ENCODE measurements at regions of chr20 and their contacts with region 1.

Region 1: GRCh38 chr20:1965520-1966351 is 28.1 kb downstream of the PDYN start:
- DNase-seq: peak; percentile 19
- ATAC-seq: peak; percentile 97
- H3K4me3 ChIP-seq: no peak overlapping the region
- H3K27ac ChIP-seq: no peak overlapping the region
- H3K4me1 ChIP-seq: no peaks in the 10 kb centered on the region; the same call in 1 of the 2 replicates
- H3K27me3 ChIP-seq: peaks cover 0 to 3% of the 10 kb centered on the region in 2 experiments; a peak in 3 of 4 replicates
- CTCF ChIP-seq: peak; percentile 92 to 95 (median 92)
- EP300 ChIP-seq: no peak
- POLR2A ChIP-seq: no peak
- RAD21 ChIP-seq: peak; percentile 84

Region 2: GRCh38 chr20:1423625-1424106 is 542.1 kb before region 1 on chr20:
- CTCF ChIA-PET with region 1: no interaction called
- POLR2A ChIA-PET with region 1: no interaction called
- RAD21 ChIA-PET with region 1: no interaction called
- SMC1A ChIA-PET with region 1: no interaction called
- in situ Hi-C with region 1: no loop called
- intact Hi-C with region 1: no loop called
- DNase-seq: no peak
- ATAC-seq: peak; percentile 89
- H3K4me3 ChIP-seq: no peak overlapping the region
- H3K27ac ChIP-seq: no peak overlapping the region
- H3K4me1 ChIP-seq: no peaks in the 10 kb centered on the region
- H3K27me3 ChIP-seq: peaks cover 0 to 2% of the 10 kb centered on the region in 2 experiments; a peak in 2 of 4 replicates
- CTCF ChIP-seq: peak in 2 of 3 experiments; percentile 12 to 36; a peak in 3 of 6 replicates
- EP300 ChIP-seq: no peak
- POLR2A ChIP-seq: no peak
- RAD21 ChIP-seq: peak; percentile 14; the same call in 1 of the 2 replicates

Region 3: DNA sequence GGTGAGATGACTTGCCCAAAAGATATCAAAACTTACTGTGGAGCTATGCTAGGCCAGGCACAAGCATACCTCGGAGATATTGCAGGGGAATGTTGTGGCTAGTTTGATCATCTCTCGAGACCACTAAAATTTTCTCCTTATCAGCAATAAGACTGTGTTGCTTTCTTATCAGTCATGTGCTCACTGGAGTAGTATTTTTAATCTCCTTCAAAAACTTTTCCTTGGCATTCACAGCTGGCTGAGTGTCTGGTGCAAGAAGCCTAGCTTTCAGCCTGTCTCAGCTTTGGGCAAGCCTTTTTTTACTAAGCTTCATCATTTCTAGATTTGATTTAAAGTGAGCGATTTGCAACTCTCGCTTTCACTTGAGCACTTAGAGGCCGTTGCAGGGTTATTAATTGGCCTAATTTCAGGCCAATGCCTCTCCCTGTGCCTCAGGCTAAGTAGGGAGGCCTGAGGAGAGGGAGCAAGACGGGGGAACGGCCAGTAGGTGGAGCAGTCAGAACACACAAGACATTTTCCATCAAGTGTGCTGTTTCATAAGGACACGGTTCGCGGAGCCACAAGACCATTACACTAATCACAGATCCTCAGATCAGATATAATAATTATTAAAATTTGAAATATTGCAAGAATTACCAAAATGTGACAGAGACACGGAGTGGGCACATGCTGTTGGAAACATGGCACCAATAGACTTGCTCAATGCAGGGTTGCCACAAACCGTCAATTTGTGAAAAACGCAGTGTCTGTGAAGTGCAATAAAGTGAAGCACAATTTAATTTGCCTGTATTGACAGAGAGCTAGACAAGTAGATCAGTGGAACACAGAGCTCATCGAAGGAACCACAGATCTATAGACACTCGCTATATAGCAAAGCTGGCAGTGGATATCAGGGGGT is 201.4 kb before region 1 on chr20:
- CTCF ChIA-PET with region 1: interaction called, 9 read pairs
- POLR2A ChIA-PET with region 1: no interaction called
- RAD21 ChIA-PET with region 1: no interaction called
- SMC1A ChIA-PET with region 1: interaction called, 9 read pairs
- in situ Hi-C with region 1: no loop called
- intact Hi-C with region 1: loop called (anchors 1 kb)
- DNase-seq: peak; percentile 57
- ATAC-seq: peak; percentile 100
- H3K4me3 ChIP-seq: no peak overlapping the region
- H3K27ac ChIP-seq: no peak overlapping the region
- H3K4me1 ChIP-seq: peaks cover 4% of the 10 kb centered on the region
- H3K27me3 ChIP-seq: peaks cover 0 to 2% of the 10 kb centered on the region in 2 experiments; a peak in 2 of 4 replicates
- CTCF ChIP-seq: peak; percentile 80 to 89 (median 81)
- EP300 ChIP-seq: no peak
- POLR2A ChIP-seq: no peak
- RAD21 ChIP-seq: peak; percentile 79

Region 4: GRCh38 chr20:1890469-1891262 is 75.1 kb before region 1 on chr20:
- CTCF ChIA-PET with region 1: no interaction called
- POLR2A ChIA-PET with region 1: no interaction called
- RAD21 ChIA-PET with region 1: no interaction called
- SMC1A ChIA-PET with region 1: no interaction called
- in situ Hi-C with region 1: no loop called
- intact Hi-C with region 1: no loop called
- DNase-seq: no peak
- ATAC-seq: no peak
- H3K4me3 ChIP-seq: no peak overlapping the region
- H3K27ac ChIP-seq: no peak overlapping the region
- H3K4me1 ChIP-seq: peaks cover 8% of the 10 kb centered on the region
- H3K27me3 ChIP-seq: no peaks in the 10 kb centered on the region
- CTCF ChIP-seq: no peak
- EP300 ChIP-seq: no peak
- POLR2A ChIP-seq: no peak
- RAD21 ChIP-seq: no peak

Region 5: DNA sequence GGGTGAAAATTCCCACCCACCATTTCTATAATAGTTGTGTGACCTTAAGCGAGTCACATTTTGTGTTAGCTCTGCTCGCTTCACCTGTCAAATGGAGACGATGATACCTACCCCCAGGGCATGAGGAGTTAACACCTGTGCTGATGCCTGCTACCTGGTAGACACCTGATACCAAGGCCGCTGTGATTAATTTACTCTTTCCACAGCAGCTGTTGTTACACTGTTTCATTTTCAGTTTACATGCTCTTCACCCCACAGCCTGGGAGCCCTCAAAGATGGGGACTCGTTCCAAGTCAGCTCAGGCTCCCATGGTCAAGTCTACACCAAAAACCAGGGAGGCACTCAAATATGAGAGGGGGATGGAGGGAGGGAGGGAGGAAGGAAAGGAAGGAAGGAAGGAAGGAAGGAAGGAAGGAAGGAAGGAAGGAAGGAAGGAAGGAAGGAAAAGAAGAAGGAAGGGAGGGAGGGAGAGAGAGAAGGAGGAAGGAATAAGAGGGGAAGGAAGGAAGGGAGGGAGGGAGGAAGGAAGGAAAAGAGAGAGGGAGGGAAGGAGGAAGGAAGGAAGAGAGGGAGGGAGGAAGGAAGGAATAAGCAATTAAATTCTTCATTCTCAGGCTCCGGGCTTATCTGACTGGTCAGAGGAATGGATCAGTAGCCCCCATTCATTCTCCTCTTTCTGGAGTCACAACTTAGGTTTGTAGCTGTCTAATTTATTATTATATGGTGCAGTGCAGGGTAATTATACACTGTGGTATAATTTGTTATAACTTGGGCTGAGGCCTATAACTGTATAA is 12.8 kb before region 1 on chr20:
- CTCF ChIA-PET with region 1: interaction called, 19 read pairs
- POLR2A ChIA-PET with region 1: no interaction called
- RAD21 ChIA-PET with region 1: no interaction called
- SMC1A ChIA-PET with region 1: interaction called, 16 read pairs
- in situ Hi-C with region 1: no loop called
- intact Hi-C with region 1: no loop called
- DNase-seq: peak; percentile 15
- ATAC-seq: peak; percentile 82
- H3K4me3 ChIP-seq: no peak overlapping the region
- H3K27ac ChIP-seq: no peak overlapping the region
- H3K4me1 ChIP-seq: peaks cover 18% of the 10 kb centered on the region
- H3K27me3 ChIP-seq: no peaks in the 10 kb centered on the region
- CTCF ChIP-seq: no peak
- EP300 ChIP-seq: no peak
- POLR2A ChIP-seq: no peak
- RAD21 ChIP-seq: no peak

Region 6: DNA sequence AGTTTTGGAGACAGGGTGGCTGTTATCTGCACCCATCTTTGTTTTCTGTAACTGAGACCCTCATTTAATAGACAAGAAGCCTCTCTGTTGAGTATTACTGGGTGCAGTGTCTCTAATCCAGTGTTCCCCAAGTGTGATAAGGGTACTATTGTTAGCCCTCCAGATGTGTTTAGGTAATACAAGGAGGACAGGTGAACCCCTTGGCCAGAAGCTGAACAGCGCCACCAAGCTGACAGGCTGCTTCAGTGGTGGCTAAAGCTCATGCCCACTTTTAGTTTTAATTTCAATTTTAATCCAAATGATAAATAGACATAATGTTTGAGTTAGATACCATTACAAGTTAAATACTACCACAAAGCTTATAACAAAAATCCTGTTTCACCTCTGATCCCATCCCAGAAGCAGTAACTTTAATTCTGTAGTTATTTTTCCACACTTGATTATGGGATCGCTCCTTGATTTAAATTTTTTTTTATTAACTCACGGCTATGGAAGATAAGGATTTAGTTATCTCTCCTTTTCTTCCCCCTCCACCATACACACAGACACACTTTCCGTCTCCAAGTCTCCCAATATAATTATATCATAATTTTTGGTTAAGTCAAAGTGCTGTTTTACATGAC is 127.5 kb after region 1 on chr20:
- CTCF ChIA-PET with region 1: interaction called, 21 read pairs
- POLR2A ChIA-PET with region 1: interaction called, 5 read pairs
- RAD21 ChIA-PET with region 1: interaction called, 3 read pairs
- SMC1A ChIA-PET with region 1: interaction called, 10 read pairs
- in situ Hi-C with region 1: no loop called
- intact Hi-C with region 1: no loop called
- DNase-seq: no peak
- ATAC-seq: peak; percentile 86
- H3K4me3 ChIP-seq: no peak overlapping the region
- H3K27ac ChIP-seq: no peak overlapping the region
- H3K4me1 ChIP-seq: no peaks in the 10 kb centered on the region; the same call in 1 of the 2 replicates
- H3K27me3 ChIP-seq: peaks cover 0 to 1% of the 10 kb centered on the region in 2 experiments; a peak in 2 of 4 replicates
- CTCF ChIP-seq: peak; percentile 58 to 66 (median 59)
- EP300 ChIP-seq: no peak
- POLR2A ChIP-seq: no peak
- RAD21 ChIP-seq: peak; percentile 50

Region 7: DNA sequence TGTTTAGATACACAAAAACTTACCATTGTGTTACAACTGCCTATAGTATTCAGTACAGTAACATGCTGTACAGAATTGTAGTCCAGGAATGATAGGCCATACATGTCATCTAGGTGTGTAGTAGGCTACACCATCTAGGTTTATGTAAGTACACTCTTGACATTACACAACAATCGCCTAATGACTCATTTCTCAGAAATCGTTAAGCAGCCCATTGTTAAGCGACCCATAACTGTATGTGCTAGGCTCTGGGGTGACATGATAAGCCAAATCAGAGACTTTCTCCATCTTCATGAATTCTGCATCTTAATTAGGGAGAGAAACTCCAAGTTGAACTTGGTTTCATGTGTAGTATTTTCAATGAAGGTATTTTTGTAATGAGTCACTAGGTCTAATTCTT is 153.0 kb after region 1 on chr20:
- CTCF ChIA-PET with region 1: interaction called, 11 read pairs
- POLR2A ChIA-PET with region 1: no interaction called
- RAD21 ChIA-PET with region 1: no interaction called
- SMC1A ChIA-PET with region 1: no interaction called
- in situ Hi-C with region 1: no loop called
- intact Hi-C with region 1: no loop called
- DNase-seq: peak; percentile 20
- ATAC-seq: peak; percentile 98
- H3K4me3 ChIP-seq: no peak overlapping the region
- H3K27ac ChIP-seq: no peak overlapping the region
- H3K4me1 ChIP-seq: peaks cover 5% of the 10 kb centered on the region
- H3K27me3 ChIP-seq: no peaks in the 10 kb centered on the region
- CTCF ChIP-seq: no peak
- EP300 ChIP-seq: 0 out of 4 replicates have a peak, but pooled peaks of 1 of the 2 experiments have one; percentile 10
- POLR2A ChIP-seq: no peak
- RAD21 ChIP-seq: no peak

Region 8: DNA sequence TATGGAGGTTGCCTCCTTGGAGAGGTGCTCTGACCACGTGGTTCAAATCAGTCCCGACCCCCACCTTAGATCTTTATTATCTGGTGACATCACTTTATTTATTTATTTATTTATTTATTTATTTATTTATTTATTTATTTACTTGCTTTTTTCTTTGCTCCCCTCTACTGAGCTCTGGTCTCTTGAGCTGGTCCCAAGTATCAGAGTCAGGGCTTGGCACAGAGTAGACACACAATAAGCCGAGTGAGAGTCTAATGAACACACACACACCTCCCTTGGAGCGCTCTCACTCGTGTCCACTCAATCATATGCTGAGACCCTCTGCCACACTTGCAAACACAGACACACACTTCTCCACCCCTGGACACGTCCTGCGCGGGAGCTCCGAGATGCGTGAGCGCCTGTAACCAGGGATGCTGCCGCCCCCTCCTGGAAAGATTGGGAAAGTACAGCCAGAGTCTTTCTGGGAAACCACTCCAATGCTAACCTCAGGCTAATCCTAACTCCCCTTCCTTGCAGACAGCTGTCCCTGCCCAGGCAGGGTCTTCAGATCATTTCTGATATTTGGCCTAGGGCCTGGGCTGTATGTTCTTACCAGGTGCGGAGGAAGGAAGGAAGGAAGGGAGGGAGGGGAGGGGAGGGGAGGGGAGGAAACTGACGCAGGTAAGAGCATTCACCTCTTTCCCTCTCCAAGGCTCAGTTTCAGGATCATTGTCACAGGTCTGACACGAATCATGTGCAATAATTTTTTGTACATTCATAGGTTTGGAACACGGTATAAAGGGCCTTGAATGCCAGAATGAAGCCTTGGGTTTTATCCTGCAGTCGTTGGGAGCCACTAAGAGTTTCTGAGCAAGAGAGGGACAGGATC is 206.8 kb after region 1 on chr20:
- CTCF ChIA-PET with region 1: interaction called, 46 read pairs
- POLR2A ChIA-PET with region 1: no interaction called
- RAD21 ChIA-PET with region 1: interaction called, 30 read pairs
- SMC1A ChIA-PET with region 1: interaction called, 18 read pairs
- in situ Hi-C with region 1: loop called (anchors 5 kb)
- intact Hi-C with region 1: loop called (anchors 1 kb)
- DNase-seq: peak; percentile 1
- ATAC-seq: peak; percentile 86
- H3K4me3 ChIP-seq: no peak overlapping the region
- H3K27ac ChIP-seq: no peak overlapping the region
- H3K4me1 ChIP-seq: no peaks in the 10 kb centered on the region
- H3K27me3 ChIP-seq: no peaks in the 10 kb centered on the region
- CTCF ChIP-seq: peak; percentile 88 to 93 (median 92)
- EP300 ChIP-seq: no peak
- POLR2A ChIP-seq: no peak
- RAD21 ChIP-seq: peak; percentile 93

Region 9: GRCh38 chr20:2451939-2452732 is 486.4 kb after region 1 on chr20:
- CTCF ChIA-PET with region 1: interaction called, 6 read pairs
- POLR2A ChIA-PET with region 1: no interaction called
- RAD21 ChIA-PET with region 1: no interaction called
- SMC1A ChIA-PET with region 1: interaction called, 3 read pairs
- in situ Hi-C with region 1: no loop called
- intact Hi-C with region 1: loop called (anchors 5 kb)
- DNase-seq: no peak
- ATAC-seq: peak; percentile 80
- H3K4me3 ChIP-seq: no peak overlapping the region
- H3K27ac ChIP-seq: no peak overlapping the region
- H3K4me1 ChIP-seq: no peaks in the 10 kb centered on the region
- H3K27me3 ChIP-seq: no peaks in the 10 kb centered on the region
- CTCF ChIP-seq: peak; percentile 76 to 89 (median 87)
- EP300 ChIP-seq: no peak
- POLR2A ChIP-seq: no peak
- RAD21 ChIP-seq: peak; percentile 69

Measured in GM12878 (cell line).